GM13976 (cell line): ENCODE measurements at regions of chr2 and their contacts with region 1.

Region 1: GRCh38 chr2:197705121-197705911 is at the start of gene MARS2:
- DNase-seq: peak; percentile 97
- CTCF ChIP-seq: no peak

Region 2: GRCh38 chr2:197777823-197778407 is 72.6 kb after region 1 on chr2:
- in situ Hi-C with region 1: loop called (anchors 5 kb)
- DNase-seq: no peak
- CTCF ChIP-seq: peak; percentile 40

Region 3: GRCh38 chr2:197972061-197972460 is 266.7 kb after region 1 on chr2:
- in situ Hi-C with region 1: no loop called
- DNase-seq: no peak
- CTCF ChIP-seq: no peak